G401 (cell line): ENCODE measurements at regions of chr10 and their contacts with region 1.

Region 1: GRCh38 chr10:97726636-97727178 is 10.2 kb upstream of the ZFYVE27 start:
- DNase-seq: peak; percentile 40

Region 2: DNA sequence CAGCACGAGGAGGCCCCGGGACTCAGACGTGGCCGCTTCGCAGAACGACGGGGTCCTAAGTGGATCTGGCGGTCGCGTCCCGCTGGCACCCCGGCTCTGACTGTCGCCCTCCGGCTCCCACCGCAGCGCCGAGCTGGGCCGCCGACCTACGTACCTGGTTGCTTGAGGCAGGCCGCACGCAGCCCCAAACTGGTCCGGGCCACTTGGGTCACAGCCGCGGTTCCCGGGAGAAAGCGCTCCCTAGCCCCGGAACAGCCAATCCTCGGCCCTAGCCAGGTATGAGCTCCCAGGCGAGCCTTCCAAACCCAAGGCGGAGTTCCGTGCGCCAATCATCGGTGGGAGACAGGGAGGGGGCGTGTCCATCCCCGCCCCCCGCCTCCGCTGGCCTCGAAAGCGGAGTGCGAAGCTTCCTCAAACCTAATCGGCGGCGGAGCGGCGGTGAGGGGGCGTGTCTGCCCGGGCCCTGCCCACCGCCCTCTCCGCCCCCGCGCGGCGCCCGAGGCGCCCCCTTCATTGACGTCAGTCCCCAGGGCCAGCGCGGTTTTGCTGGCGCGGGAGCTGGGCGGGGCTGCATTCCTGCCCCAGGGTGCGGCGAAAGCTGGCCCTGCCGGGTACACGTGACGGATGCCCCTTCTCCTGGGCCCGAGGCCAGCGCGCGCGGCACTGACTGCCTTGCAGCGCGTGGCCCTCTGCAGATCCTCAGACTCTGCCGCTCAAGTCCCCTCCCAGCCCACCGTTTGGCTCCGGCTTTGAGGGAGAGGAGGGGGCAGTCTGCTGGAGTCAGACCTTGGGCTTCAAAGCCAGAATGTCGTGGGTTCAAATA is 39.5 kb before region 1 on chr10 and contains the start of gene AVPI1:
- in situ Hi-C with region 1: loop called (anchors 5 kb)
- DNase-seq: peak; percentile 98
- total RNA-seq, gene AVPI1: 19.1 and 24.4 TPM in 2 replicates